ENCODE measurements at regions of chrX and their contacts with region 1.

Region 1: GRCh38 chrX:101550362-101550750 is at the start of gene ARMCX1:
- DNase-seq: peak; percentile 46 to 83 (median 74)
- H3K4me3 ChIP-seq: peak within 1 kb of the TSS; percentile 45 to 79 (median 65)
- H3K27ac ChIP-seq: peak within 1 kb of the TSS; percentile 53 to 93 (median 86)
- H3K27me3 ChIP-seq: peaks cover 0 to 32% (median 0%) of the 10 kb centered on the region in 45 donors
- CTCF ChIP-seq: no peak
- total RNA-seq, gene ARMCX1: 19.4 to 41.9 (median 32.3) TPM

Region 2: DNA sequence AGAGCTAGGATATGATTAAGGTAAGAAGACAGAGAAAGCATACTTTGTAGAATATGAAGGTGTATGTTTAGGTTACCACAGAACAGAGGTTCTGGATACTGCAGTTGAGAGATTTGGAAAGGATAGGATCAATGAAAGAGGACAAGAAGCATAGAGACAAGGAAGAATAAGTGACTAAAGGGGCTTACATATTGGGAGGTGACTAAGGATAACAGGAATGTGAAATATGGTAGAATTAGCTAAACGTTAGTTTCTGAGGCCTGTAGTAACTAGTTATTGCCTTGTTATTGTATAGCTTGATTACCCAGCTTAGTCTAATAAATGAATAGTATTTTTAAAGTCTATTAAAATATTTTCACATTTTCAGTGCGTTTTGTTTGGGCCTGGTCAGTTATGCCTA is 414.1 kb before region 1 on chrX:
- intact Hi-C with region 1: no loop called
- DNase-seq: no peak
- H3K4me3 ChIP-seq: no peak overlapping the region
- H3K27ac ChIP-seq: no peak overlapping the region
- H3K27me3 ChIP-seq: peaks cover 0 to 42% (median 4%) of the 10 kb centered on the region in 45 donors
- CTCF ChIP-seq: no peak

Region 3: GRCh38 chrX:101337776-101338271 is 212.5 kb before region 1 on chrX:
- intact Hi-C with region 1: no loop called
- DNase-seq: no peak
- H3K4me3 ChIP-seq: no peak overlapping the region
- H3K27ac ChIP-seq: no peak overlapping the region
- H3K27me3 ChIP-seq: peaks cover 0 to 30% (median 0%) of the 10 kb centered on the region in 45 donors
- CTCF ChIP-seq: no peak

Region 4: GRCh38 chrX:101415180-101416145 is 134.9 kb before region 1 on chrX:
- intact Hi-C with region 1: loop called in 1 of 2 experiments (anchors 2 kb)
- DNase-seq: peak in 1 of 10 donors; percentile 25
- H3K4me3 ChIP-seq: peak overlapping the region in 4 of 59 donors; percentile 4 to 30 (median 16)
- H3K27ac ChIP-seq: peak overlapping the region; percentile 63 to 99 (median 90)
- H3K27me3 ChIP-seq: peaks cover 0 to 79% (median 29%) of the 10 kb centered on the region in 45 donors
- CTCF ChIP-seq: peak; percentile 35 to 91 (median 81)

Region 5: GRCh38 chrX:101485199-101485949 is 65.0 kb before region 1 on chrX and contains the start of gene ARMCX4:
- intact Hi-C with region 1: loop called in 1 of 2 experiments (anchors 10 kb)
- DNase-seq: peak; percentile 61 to 87 (median 76)
- H3K4me3 ChIP-seq: peak within 1 kb of the TSS; percentile 41 to 82 (median 66)
- H3K27ac ChIP-seq: peak within 1 kb of the TSS in 47 of 59 donors; percentile 28 to 84 (median 65)
- H3K27me3 ChIP-seq: peaks cover 0 to 72% (median 12%) of the 10 kb centered on the region in 45 donors
- CTCF ChIP-seq: peak in 1 of 56 donors; percentile 20
- total RNA-seq, gene ARMCX4: 23.4 to 52.7 (median 36.4) TPM

Measured in dorsolateral prefrontal cortex (tissue), 120 donors.